ENCODE measurements at regions of chrX and their contacts with region 1.

Region 1: GRCh38 chrX:103464774-103465117 is 54.5 kb downstream of the RAB40A start:
- DNase-seq: peak; percentile 35 to 71
- ATAC-seq: peak; percentile 93 to 98
- H3K4me3 ChIP-seq: peak overlapping the region; percentile 41
- H3K27ac ChIP-seq: peak overlapping the region in 1 of 2 experiments; percentile 61; a peak in 3 of 6 replicates
- H3K4me1 ChIP-seq: no peaks in the 10 kb centered on the region
- CTCF ChIP-seq: peak; percentile 73
- EP300 ChIP-seq: no peak
- POLR2A ChIP-seq: no peak
- RAD21 ChIP-seq: peak; percentile 79 to 87

Region 2: GRCh38 chrX:103211012-103211715 is 253.6 kb before region 1 on chrX:
- CTCF ChIA-PET with region 1: interaction called, 18 read pairs
- POLR2A ChIA-PET with region 1: no interaction called
- DNase-seq: peak; percentile 12 to 34
- ATAC-seq: peak; percentile 58 to 80; a peak in 3 of 6 replicates
- H3K4me3 ChIP-seq: no peak overlapping the region
- H3K27ac ChIP-seq: no peak overlapping the region
- H3K4me1 ChIP-seq: no peaks in the 10 kb centered on the region
- CTCF ChIP-seq: peak; percentile 60
- EP300 ChIP-seq: no peak
- POLR2A ChIP-seq: no peak
- RAD21 ChIP-seq: peak; percentile 35 to 42; a peak in 3 of 5 replicates

Region 3: GRCh38 chrX:103343105-103343504 is 121.6 kb before region 1 on chrX:
- CTCF ChIA-PET with region 1: interaction called, 54 read pairs
- POLR2A ChIA-PET with region 1: no interaction called
- DNase-seq: peak; percentile 29 to 41
- ATAC-seq: peak in 1 of 2 experiments; percentile 79; a peak in 3 of 6 replicates
- H3K4me3 ChIP-seq: no peak overlapping the region
- H3K27ac ChIP-seq: no peak overlapping the region
- H3K4me1 ChIP-seq: no peaks in the 10 kb centered on the region
- CTCF ChIP-seq: peak; percentile 71
- EP300 ChIP-seq: no peak
- POLR2A ChIP-seq: no peak
- RAD21 ChIP-seq: peak; percentile 69 to 70

Region 4: GRCh38 chrX:103475381-103475780 is 10.6 kb after region 1 on chrX:
- CTCF ChIA-PET with region 1: interaction called, 11 read pairs
- POLR2A ChIA-PET with region 1: no interaction called
- DNase-seq: no peak
- ATAC-seq: no peak
- H3K4me3 ChIP-seq: no peak overlapping the region
- H3K27ac ChIP-seq: no peak overlapping the region
- H3K4me1 ChIP-seq: no peaks in the 10 kb centered on the region
- CTCF ChIP-seq: no peak
- EP300 ChIP-seq: no peak
- POLR2A ChIP-seq: no peak
- RAD21 ChIP-seq: no peak

Region 5: DNA sequence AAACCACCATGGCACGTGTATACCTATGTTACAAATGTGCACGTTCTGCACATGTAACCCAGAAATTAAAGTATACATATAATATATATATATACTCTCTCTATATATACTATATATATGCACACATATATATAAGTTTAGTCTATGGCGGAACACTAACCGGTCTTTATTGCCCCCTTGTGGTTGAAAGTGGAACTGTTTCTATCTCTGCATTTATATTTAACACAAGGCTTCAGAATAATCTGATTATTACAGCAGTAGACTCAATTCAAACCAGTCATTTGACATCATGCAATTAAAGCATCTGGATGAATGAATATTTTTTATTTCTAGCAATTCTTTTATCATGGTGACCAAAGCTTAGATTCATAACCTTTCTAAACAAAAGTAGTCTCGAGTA is 352.8 kb after region 1 on chrX:
- CTCF ChIA-PET with region 1: no interaction called
- POLR2A ChIA-PET with region 1: no interaction called
- DNase-seq: peak in 1 of 2 experiments; percentile 38
- ATAC-seq: peak in 1 of 2 experiments; percentile 59; a peak in 2 of 6 replicates
- H3K4me3 ChIP-seq: no peak overlapping the region
- H3K27ac ChIP-seq: no peak overlapping the region
- H3K4me1 ChIP-seq: 0 out of 3 replicates have a peak, but pooled peaks cover 5% of the 10 kb centered on the region
- CTCF ChIP-seq: peak; percentile 70
- EP300 ChIP-seq: no peak
- POLR2A ChIP-seq: no peak
- RAD21 ChIP-seq: peak; percentile 65